SK-N-SH (cell line): ENCODE measurements at regions of chr7 and their contacts with region 1.

Region 1: GRCh38 chr7:75762314-75762917 is 9.6 kb downstream of the CCL26 start:
- DNase-seq: peak; percentile 84
- H3K4me3 ChIP-seq: no peak overlapping the region
- H3K27ac ChIP-seq: no peak overlapping the region
- H3K4me1 ChIP-seq: no peaks in the 10 kb centered on the region
- H3K27me3 ChIP-seq: no peaks in the 10 kb centered on the region
- CTCF ChIP-seq: peak; percentile 91
- EP300 ChIP-seq: no peak
- RAD21 ChIP-seq: peak; percentile 99

Region 2: DNA sequence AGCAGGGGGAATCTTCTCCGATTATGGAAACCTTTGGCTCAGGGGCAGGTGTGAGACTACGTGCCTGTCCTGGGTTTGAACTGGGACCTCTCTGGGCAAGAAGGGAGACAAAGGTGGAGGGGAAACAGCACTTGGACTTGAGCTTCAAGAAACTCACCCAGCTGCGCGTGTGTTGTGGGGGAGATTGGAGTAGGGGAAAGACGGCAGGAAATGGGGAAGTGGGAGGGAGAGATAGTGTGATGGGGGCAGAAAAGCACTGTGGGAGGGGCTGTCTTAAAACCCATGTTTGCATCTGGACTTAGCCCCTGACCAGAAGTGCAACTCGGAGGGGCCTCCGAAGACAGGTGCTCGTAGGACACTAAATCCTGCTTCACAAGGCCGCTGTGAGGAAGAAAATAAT is 130.7 kb before region 1 on chr7:
- CTCF ChIA-PET with region 1: no interaction called
- POLR2A ChIA-PET with region 1: no interaction called
- DNase-seq: no peak
- H3K4me3 ChIP-seq: no peak overlapping the region
- H3K27ac ChIP-seq: no peak overlapping the region
- H3K4me1 ChIP-seq: no peaks in the 10 kb centered on the region
- H3K27me3 ChIP-seq: no peaks in the 10 kb centered on the region
- CTCF ChIP-seq: no peak
- EP300 ChIP-seq: no peak
- RAD21 ChIP-seq: no peak

Region 3: DNA sequence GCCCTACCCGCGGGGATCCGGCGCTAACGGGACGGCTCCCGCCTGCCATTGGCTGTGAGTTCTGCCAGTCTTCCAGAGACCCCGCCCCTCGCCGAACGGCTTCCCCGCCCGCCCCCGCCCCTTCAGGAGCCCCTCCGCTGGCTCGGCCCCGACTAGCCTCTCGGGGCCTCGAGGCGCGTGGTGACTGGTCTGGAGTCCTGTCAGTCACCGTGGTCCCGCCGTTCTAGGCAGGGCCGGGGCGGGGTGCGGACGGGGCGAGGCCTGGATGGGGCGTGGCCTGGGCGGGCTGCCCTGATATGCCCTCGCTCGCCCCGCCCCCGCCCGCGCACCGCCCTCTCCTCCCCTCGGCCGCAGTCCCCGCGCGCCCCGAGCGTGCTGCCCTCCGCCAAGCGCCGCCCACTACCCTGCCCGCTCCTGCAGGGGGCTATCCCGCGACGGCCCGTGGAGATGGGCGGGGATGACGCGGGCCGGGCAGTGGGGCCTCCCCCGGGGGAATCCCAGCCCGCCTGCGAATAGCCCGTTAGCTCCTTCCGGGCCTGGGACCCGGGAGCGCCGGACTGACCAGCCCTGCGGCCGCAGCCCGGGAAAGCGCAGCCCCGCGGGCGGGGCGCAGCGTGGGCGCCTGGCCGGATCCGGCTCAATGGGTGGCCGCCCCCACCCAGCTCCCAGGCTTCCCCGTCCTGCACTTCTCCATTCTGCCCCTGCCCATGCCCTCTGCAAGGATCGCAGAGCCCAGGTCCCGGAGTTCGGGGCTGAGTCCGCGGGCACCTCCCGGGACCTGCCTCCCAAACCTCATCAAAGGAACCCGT is 23.2 kb before region 1 on chr7:
- CTCF ChIA-PET with region 1: interaction called, 18 read pairs
- POLR2A ChIA-PET with region 1: no interaction called
- DNase-seq: peak; percentile 100
- H3K4me3 ChIP-seq: peak overlapping the region; percentile 71 to 99
- H3K27ac ChIP-seq: peak overlapping the region; percentile 24 to 53; a peak in 3 of 4 replicates
- H3K4me1 ChIP-seq: peaks cover 0 to 5% of the 10 kb centered on the region in 2 experiments; a peak in 1 of 4 replicates
- H3K27me3 ChIP-seq: no peaks in the 10 kb centered on the region
- CTCF ChIP-seq: no peak
- EP300 ChIP-seq: no peak
- RAD21 ChIP-seq: no peak

Region 4: DNA sequence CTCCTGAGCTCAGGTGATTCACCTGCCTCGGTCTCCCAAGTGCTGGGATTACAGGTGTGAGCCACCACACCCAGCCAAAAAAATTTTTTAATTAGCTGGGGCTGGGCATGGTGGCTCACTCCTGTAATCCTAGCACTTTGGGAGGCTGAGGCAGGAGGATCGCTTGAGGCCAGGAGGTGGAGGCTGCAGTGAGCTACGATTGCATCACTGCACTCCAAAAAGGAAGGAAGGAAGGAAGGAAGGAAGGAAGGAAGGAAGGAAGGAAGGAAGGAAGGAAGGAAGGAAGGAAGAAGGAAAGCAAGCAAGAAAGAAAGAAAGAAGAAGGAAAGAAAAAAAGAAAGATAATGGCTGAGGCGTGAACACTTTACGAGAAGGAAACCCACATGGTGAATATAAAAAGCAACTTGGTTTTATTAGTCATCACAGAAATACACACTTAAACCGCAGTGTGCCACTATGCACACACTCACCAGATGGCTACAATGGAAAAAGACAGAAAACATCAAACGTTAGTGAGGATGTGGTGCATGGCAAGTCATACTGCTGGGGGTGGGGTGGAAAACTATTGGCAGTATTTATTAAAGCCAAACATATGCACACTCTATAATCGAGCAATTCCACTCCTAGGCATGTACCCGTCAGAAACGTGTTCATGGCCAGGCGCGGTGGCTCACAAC is 14.0 kb after region 1 on chr7:
- CTCF ChIA-PET with region 1: interaction called, 14 read pairs
- POLR2A ChIA-PET with region 1: no interaction called
- DNase-seq: no peak
- H3K4me3 ChIP-seq: no peak overlapping the region
- H3K27ac ChIP-seq: no peak overlapping the region
- H3K4me1 ChIP-seq: no peaks in the 10 kb centered on the region
- H3K27me3 ChIP-seq: peaks cover 17% of the 10 kb centered on the region; the same call in 1 of the 2 replicates
- CTCF ChIP-seq: peak; percentile 23; the same call in 1 of the 2 replicates
- EP300 ChIP-seq: peak in 1 of 2 experiments; percentile 23; a peak in 1 of 4 replicates
- RAD21 ChIP-seq: no peak

Region 5: DNA sequence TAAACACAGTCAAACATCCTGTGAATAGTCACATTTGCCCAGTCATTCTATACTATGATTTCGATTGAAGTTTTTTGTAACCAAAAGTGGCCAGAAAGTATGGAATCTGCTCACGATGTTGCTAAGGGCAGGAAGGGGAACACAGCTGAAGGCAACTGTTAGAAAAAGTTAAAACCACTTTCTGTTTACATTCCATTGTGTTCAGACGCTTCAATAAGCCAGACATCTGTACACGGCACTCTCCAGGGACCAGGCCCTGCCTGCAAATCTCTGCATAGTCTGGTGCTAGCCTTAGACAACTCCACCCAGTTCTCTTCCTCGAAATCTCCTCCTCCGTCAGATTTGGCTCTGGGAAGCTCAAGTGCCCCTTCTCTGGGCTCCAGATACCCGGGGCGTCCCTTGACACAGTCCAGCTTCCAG is 249.0 kb after region 1 on chr7:
- CTCF ChIA-PET with region 1: no interaction called
- POLR2A ChIA-PET with region 1: no interaction called
- DNase-seq: no peak
- H3K4me3 ChIP-seq: no peak overlapping the region
- H3K27ac ChIP-seq: no peak overlapping the region
- H3K4me1 ChIP-seq: no peaks in the 10 kb centered on the region; a peak in 1 of 4 replicates
- H3K27me3 ChIP-seq: no peaks in the 10 kb centered on the region
- CTCF ChIP-seq: no peak
- EP300 ChIP-seq: no peak
- RAD21 ChIP-seq: no peak